Activated T-helper 2 cell treated with anti-CD3 and anti-CD28 coated beads, Interferon-gamma antibody, Interleukin-2, Interleukin-4, amounts not matched to agents 10 μg/mL and 5 μg/mL and 100 μg/mL, durations not matched to agents 14 hours and 24 hours and 36 hours (primary cell): ENCODE measurements at regions of chrX and their contacts with region 1.

Region 1: DNA sequence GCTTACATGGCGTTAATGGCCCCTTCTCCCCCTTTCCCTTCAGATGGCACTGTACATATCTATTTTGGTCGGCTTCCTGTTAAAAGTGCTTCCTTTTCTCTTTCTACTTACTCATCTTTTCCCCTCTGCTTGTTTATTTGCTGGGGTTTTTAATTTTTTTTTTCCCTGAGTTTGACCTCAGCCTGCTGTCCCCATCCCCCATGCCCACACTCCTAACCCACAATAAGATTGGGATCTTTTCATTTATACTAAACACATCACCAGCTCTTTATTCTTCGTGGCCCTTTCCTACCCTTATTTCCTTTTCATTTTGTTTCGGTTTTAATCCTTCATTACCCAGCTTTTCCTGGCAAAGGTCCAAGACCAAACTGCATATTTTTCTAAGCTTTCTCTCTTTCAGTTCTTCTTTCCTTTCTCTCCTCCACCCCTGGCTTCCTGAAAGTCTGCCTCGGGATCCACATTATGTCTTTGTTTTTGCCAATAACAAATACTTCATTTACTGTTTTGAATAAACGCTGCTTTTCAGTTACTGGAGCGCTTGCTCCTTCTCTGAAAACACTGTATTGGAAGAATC is 152.0 kb upstream of the USP9X start:
- DNase-seq: peak; percentile 12
- H3K4me3 Mint-ChIP-seq: peak overlapping the region; percentile 54
- H3K27ac Mint-ChIP-seq: peak overlapping the region; percentile 90
- H3K4me1 Mint-ChIP-seq: peaks cover 17% of the 10 kb centered on the region
- H3K27me3 Mint-ChIP-seq: no peaks in the 10 kb centered on the region

Region 2: DNA sequence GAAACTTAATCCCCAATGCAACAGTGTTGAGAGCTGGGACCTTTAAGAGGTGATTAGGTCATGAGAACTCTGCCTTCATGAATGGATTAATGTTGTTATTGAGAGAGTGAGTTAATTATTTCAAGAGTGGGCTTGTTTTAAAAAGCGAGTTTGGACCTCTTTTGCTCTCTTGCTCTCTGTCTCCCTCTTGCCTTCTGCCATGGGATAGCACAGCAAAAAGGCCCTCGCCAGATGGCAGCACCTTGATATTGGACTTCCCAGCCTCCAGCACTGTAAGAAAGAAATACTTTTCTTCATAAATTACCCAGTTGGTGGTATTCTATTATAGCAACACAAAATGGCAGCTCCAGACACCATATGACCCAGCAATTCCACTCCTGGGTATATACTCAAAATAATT is 359.5 kb before region 1 on chrX:
- intact Hi-C with region 1: loop called (anchors 5 kb)
- DNase-seq: no peak
- H3K4me3 Mint-ChIP-seq: no peak overlapping the region
- H3K27ac Mint-ChIP-seq: no peak overlapping the region
- H3K4me1 Mint-ChIP-seq: peaks cover 13% of the 10 kb centered on the region
- H3K27me3 Mint-ChIP-seq: no peaks in the 10 kb centered on the region

Region 3: DNA sequence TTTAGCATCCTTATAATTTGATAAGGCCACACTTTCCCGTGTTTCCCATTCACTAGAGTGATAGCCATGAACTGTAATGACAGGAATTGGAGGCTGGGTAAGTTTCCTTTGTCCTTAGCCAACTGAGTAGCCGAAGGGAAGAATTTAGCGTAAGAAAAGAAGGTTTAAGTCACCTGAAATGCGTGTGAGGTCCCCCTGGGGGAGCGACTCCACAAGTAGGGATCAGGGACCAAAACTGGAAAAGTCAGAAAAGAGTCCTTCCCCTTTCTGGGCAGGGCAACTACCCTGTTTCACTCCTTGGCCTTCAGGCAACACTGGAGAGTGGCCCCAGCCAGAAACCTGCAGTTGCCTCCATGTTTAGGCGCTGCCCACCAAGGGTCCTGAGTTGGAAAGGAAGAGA is 116.3 kb before region 1 on chrX:
- intact Hi-C with region 1: no loop called
- DNase-seq: no peak
- H3K4me3 Mint-ChIP-seq: no peak overlapping the region
- H3K27ac Mint-ChIP-seq: no peak overlapping the region
- H3K4me1 Mint-ChIP-seq: no peaks in the 10 kb centered on the region
- H3K27me3 Mint-ChIP-seq: no peaks in the 10 kb centered on the region

Region 4: GRCh38 chrX:40952855-40953254 is 19.6 kb after region 1 on chrX:
- intact Hi-C with region 1: loop called (anchors 1 kb)
- DNase-seq: peak; percentile 8
- H3K4me3 Mint-ChIP-seq: peak overlapping the region; percentile 5
- H3K27ac Mint-ChIP-seq: peak overlapping the region; percentile 66
- H3K4me1 Mint-ChIP-seq: peaks cover 14% of the 10 kb centered on the region
- H3K27me3 Mint-ChIP-seq: no peaks in the 10 kb centered on the region

Region 5: DNA sequence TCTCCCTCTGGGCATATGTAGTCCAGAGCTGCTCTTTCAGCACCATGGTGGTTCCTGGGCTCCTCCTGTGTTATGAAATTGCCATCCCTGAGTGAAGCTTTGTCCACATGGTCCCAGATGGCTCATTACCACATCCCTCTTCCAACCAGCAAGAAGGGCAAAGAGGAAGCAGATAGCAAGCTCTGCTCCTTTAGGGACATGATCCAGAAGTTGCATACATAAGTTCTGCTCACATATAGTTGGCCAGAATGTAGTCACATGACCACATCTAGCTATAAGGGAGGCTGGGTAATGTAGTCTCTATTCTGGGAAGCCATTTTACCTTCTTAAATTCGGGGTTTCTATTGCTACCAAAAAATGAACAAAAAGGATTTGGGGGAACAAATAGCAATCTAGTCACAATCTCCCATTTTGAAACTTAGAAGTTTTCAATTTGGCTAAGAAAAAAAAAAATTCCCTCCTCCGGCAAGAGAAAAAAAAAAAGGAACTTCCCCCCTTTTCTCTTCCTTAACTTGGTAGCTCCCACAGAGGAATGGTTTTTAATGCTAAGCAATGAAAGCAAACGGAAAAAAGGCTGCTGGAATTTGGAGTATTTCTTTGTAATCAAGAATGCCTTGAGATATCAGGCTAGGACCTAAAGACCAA is 63.8 kb after region 1 on chrX:
- intact Hi-C with region 1: no loop called
- DNase-seq: no peak
- H3K4me3 Mint-ChIP-seq: peak overlapping the region; percentile 21
- H3K27ac Mint-ChIP-seq: no peak overlapping the region
- H3K4me1 Mint-ChIP-seq: no peaks in the 10 kb centered on the region
- H3K27me3 Mint-ChIP-seq: no peaks in the 10 kb centered on the region

Region 6: DNA sequence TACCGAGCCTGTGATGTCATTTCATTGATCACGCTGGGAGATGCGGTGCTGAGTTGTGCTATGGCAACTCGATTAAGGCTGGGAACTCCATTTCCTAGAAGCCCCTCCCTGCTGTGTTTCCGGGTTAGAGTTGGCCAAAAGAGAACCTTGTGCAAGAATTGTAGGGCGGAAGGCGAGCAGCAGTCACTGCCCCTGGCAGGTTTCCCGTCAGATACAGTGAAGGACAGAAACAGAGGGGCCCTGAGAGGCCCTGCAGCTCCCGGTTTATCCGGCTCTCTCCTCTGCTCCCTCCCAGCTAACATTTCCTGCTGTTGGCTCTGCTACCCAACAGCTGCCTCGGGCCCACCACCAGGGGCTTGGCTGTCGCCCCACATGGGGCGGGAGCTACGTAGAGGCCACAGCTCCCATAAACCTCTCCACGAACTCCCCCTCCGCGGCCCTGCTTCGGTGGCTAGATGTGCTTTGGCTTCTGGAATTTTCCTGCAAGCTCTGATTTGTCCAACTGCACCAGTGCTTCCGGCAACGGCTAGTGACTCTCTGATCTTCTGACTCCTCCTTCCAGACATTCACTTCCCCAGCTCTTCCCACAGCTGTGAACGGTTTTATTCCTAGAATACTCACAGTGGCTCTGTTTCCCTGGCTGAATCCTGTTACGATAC is 77.1 kb after region 1 on chrX:
- intact Hi-C with region 1: loop called (anchors 5 kb)
- DNase-seq: peak; percentile 52
- H3K4me3 Mint-ChIP-seq: peak overlapping the region; percentile 55
- H3K27ac Mint-ChIP-seq: peak overlapping the region; percentile 78
- H3K4me1 Mint-ChIP-seq: peaks cover 22% of the 10 kb centered on the region
- H3K27me3 Mint-ChIP-seq: peaks cover 15% of the 10 kb centered on the region

Region 7: GRCh38 chrX:41084044-41084892 is 151.0 kb after region 1 on chrX:
- intact Hi-C with region 1: loop called (anchors 2 kb)
- DNase-seq: peak; percentile 88
- H3K4me3 Mint-ChIP-seq: peak overlapping the region; percentile 89
- H3K27ac Mint-ChIP-seq: peak overlapping the region; percentile 99
- H3K4me1 Mint-ChIP-seq: peaks cover 18% of the 10 kb centered on the region
- H3K27me3 Mint-ChIP-seq: no peaks in the 10 kb centered on the region

Region 8: GRCh38 chrX:41259516-41259915 is 326.3 kb after region 1 on chrX:
- intact Hi-C with region 1: no loop called
- DNase-seq: no peak
- H3K4me3 Mint-ChIP-seq: no peak overlapping the region
- H3K27ac Mint-ChIP-seq: no peak overlapping the region
- H3K4me1 Mint-ChIP-seq: no peaks in the 10 kb centered on the region
- H3K27me3 Mint-ChIP-seq: no peaks in the 10 kb centered on the region

Region 9: GRCh38 chrX:41512394-41512793 is 579.2 kb after region 1 on chrX:
- intact Hi-C with region 1: loop called (anchors 10 kb)
- DNase-seq: no peak
- H3K4me3 Mint-ChIP-seq: no peak overlapping the region
- H3K27ac Mint-ChIP-seq: peak overlapping the region; percentile 73
- H3K4me1 Mint-ChIP-seq: peaks cover 22% of the 10 kb centered on the region
- H3K27me3 Mint-ChIP-seq: no peaks in the 10 kb centered on the region